GM23248 (cell line): ENCODE measurements at regions of chr5 and their contacts with region 1.

Region 1: DNA sequence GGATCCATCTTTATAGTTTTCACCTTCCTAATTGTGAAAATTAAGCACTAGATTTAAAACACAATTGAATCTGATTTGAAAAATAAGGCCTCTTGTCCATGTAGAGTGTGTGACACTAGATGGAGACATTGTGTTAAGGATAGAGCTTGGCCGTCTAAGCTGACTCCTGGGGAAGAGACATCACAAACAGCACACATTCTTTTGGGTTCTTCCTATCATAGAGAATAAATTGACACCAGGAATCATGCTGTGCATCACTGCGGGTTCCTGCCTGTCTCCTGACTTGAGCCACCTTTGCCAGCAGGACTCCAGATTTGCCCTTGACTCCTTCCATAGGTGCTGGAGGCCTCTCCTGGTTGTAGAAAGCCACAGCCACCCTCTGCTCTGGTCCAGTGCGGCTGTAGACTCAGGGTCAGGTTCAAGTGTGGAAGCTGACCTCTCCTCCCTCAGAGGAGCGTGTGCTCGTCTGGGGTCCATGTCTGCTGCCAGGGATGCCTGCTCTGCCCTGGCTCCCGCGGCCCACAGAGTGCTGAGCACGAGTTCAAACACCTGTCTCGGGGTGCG is 11.2 kb downstream of the ROPN1L start:
- DNase-seq: peak; percentile 91
- H3K4me3 ChIP-seq: no peak overlapping the region
- H3K27ac ChIP-seq: no peak overlapping the region
- H3K4me1 ChIP-seq: peaks cover 47% of the 10 kb centered on the region
- H3K27me3 ChIP-seq: no peaks in the 10 kb centered on the region

Region 2: GRCh38 chr5:10627160-10627701 is 174.4 kb after region 1 on chr5:
- in situ Hi-C with region 1: loop called (anchors 5 kb)
- DNase-seq: no peak
- H3K4me3 ChIP-seq: peak overlapping the region; percentile 69
- H3K27ac ChIP-seq: peak overlapping the region; percentile 64
- H3K4me1 ChIP-seq: 0 out of 2 replicates have a peak, but pooled peaks cover 6% of the 10 kb centered on the region
- H3K27me3 ChIP-seq: no peaks in the 10 kb centered on the region

Region 3: GRCh38 chr5:10876006-10876744 is 423.3 kb after region 1 on chr5:
- in situ Hi-C with region 1: no loop called
- DNase-seq: no peak
- H3K4me3 ChIP-seq: no peak overlapping the region
- H3K27ac ChIP-seq: no peak overlapping the region
- H3K4me1 ChIP-seq: no peaks in the 10 kb centered on the region
- H3K27me3 ChIP-seq: peaks cover 33% of the 10 kb centered on the region